ENCODE measurements at regions of chr1 and their contacts with region 1.

Region 1: GRCh38 chr1:248807067-248807737 is 18.5 kb downstream of the SH3BP5L start:
- DNase-seq: no peak
- ATAC-seq: peak; percentile 79
- H3K4me3 ChIP-seq: no peak overlapping the region
- H3K27ac ChIP-seq: no peak overlapping the region
- H3K4me1 ChIP-seq: peaks cover 24% of the 10 kb centered on the region
- H3K27me3 ChIP-seq: no peaks in the 10 kb centered on the region
- CTCF ChIP-seq: peak; percentile 91 to 96 (median 95)
- EP300 ChIP-seq: no peak
- POLR2A ChIP-seq: 0 out of 2 replicates have a peak, but pooled peaks have one; percentile 23
- RAD21 ChIP-seq: peak; percentile 99

Region 2: DNA sequence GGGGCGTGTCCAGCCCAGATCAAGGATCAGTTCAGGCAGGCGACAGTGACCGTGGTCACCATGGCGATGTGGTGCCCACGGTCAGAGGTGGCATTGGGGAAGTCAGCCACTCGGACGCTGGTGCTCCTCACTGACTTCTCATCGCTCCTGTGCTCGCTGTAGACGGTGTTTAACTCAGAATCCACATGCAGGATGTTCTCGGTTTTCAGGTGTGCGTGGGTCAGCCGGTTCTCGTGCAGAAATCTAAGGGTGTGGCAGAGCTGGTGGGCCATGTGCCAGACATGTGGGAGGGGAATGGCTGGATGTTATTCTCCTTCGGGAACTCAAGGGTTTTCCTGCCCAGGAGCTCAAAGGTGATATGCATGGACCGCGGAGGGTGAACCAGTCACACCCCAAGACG is 870.8 kb before region 1 on chr1:
- CTCF ChIA-PET with region 1: interaction called, 13 read pairs
- POLR2A ChIA-PET with region 1: no interaction called
- RAD21 ChIA-PET with region 1: interaction called, 3 read pairs
- SMC1A ChIA-PET with region 1: interaction called, 4 read pairs
- in situ Hi-C with region 1: no loop called
- intact Hi-C with region 1: no loop called
- DNase-seq: no peak
- ATAC-seq: no peak
- H3K4me3 ChIP-seq: no peak overlapping the region
- H3K27ac ChIP-seq: no peak overlapping the region
- H3K4me1 ChIP-seq: no peaks in the 10 kb centered on the region
- H3K27me3 ChIP-seq: no peaks in the 10 kb centered on the region
- CTCF ChIP-seq: no peak
- EP300 ChIP-seq: no peak
- POLR2A ChIP-seq: no peak
- RAD21 ChIP-seq: no peak

Region 3: DNA sequence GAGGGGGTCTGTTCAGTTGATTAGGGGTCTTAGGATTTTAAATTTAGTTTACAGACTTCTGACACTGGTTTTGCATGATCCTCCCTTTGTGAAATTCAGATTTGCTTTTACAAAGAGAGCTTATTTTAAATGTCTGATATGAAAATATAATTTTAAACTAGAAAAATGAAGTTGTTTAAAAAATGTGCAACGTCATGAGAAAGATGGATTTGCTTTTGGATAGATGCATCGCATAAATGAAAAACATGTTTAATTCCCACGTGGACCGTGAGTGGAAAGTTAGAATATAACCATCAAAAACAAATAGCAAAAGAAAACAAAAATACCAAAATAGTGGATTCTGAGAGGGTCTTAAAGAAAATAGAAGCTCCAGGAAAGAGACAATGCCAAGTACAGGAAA is 336.0 kb before region 1 on chr1:
- CTCF ChIA-PET with region 1: interaction called, 3 read pairs
- POLR2A ChIA-PET with region 1: no interaction called
- RAD21 ChIA-PET with region 1: interaction called, 5 read pairs
- SMC1A ChIA-PET with region 1: interaction called, 5 read pairs
- in situ Hi-C with region 1: no loop called
- intact Hi-C with region 1: loop called (anchors 5 kb)
- DNase-seq: no peak
- ATAC-seq: no peak
- H3K4me3 ChIP-seq: no peak overlapping the region
- H3K27ac ChIP-seq: no peak overlapping the region
- H3K4me1 ChIP-seq: 0 out of 2 replicates have a peak, but pooled peaks cover 4% of the 10 kb centered on the region
- H3K27me3 ChIP-seq: no peaks in the 10 kb centered on the region
- CTCF ChIP-seq: no peak
- EP300 ChIP-seq: no peak
- POLR2A ChIP-seq: no peak
- RAD21 ChIP-seq: no peak

Region 4: DNA sequence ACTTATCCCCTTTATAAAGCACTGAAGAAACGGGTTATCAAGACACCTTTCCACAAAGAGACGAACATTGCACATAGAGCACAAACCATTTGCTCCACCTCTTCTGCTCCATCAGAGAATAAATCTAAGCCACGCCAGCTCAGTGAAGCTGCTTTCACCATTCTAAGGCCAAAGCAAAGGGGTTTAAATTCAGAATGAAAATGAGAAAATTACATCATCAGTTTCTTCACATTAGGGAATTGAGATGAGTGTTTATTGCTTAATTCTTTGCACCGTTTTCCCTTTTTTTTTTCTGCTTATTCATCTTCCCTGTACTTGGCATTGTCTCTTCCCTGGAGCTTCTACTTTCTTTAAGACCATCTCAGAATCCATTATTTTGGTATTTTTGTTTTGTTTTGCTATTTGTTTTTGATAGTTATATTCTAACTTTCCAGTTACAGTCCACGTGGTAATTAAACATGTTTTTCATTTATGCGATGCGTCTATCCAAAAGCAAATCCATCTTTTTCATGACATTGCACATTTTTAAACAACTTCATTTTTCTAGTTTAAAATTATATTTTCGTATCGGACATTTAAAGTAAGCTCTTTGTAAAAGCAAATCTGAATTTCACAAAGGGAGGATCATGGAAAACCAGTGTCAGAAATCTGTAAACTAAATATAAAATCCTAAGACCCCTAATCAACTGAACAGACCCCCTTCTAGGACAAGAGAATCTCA is 230.8 kb before region 1 on chr1:
- CTCF ChIA-PET with region 1: no interaction called
- POLR2A ChIA-PET with region 1: no interaction called
- RAD21 ChIA-PET with region 1: no interaction called
- SMC1A ChIA-PET with region 1: no interaction called
- in situ Hi-C with region 1: no loop called
- intact Hi-C with region 1: no loop called
- DNase-seq: no peak
- ATAC-seq: no peak
- H3K4me3 ChIP-seq: no peak overlapping the region
- H3K27ac ChIP-seq: no peak overlapping the region
- H3K4me1 ChIP-seq: no peaks in the 10 kb centered on the region
- H3K27me3 ChIP-seq: no peaks in the 10 kb centered on the region
- CTCF ChIP-seq: no peak
- EP300 ChIP-seq: no peak
- POLR2A ChIP-seq: no peak
- RAD21 ChIP-seq: no peak

Region 5: DNA sequence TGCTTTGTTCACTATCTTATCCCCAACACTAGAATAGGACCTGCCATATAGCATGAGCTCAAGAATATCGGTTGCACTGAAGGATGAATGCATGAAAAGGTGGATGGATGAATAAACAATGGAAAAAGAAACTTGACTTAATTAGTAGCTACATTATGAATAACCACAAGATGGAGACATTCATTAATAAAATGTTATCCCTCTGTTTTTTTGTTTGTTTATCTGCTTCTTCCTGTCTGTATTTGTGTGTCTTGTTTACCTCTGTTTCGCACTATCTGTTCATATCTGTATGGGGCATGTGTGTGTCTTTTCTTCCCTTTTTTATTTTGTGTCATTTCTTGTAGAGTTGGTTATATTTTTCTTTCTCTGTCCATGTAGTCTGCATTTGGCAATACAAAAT is 103.5 kb before region 1 on chr1:
- CTCF ChIA-PET with region 1: interaction called, 50 read pairs
- POLR2A ChIA-PET with region 1: interaction called, 3 read pairs
- RAD21 ChIA-PET with region 1: interaction called, 53 read pairs
- SMC1A ChIA-PET with region 1: interaction called, 61 read pairs
- in situ Hi-C with region 1: loop called (anchors 5 kb)
- intact Hi-C with region 1: no loop called
- DNase-seq: no peak
- ATAC-seq: no peak
- H3K4me3 ChIP-seq: no peak overlapping the region
- H3K27ac ChIP-seq: no peak overlapping the region
- H3K4me1 ChIP-seq: no peaks in the 10 kb centered on the region
- H3K27me3 ChIP-seq: no peaks in the 10 kb centered on the region
- CTCF ChIP-seq: peak in 1 of 3 experiments; percentile 5; a peak in 1 of 6 replicates
- EP300 ChIP-seq: no peak
- POLR2A ChIP-seq: no peak
- RAD21 ChIP-seq: no peak

Region 6: GRCh38 chr1:248757784-248758195 is 49.4 kb before region 1 on chr1:
- CTCF ChIA-PET with region 1: no interaction called
- POLR2A ChIA-PET with region 1: no interaction called
- RAD21 ChIA-PET with region 1: no interaction called
- SMC1A ChIA-PET with region 1: no interaction called
- in situ Hi-C with region 1: no loop called
- intact Hi-C with region 1: no loop called
- DNase-seq: no peak
- ATAC-seq: no peak
- H3K4me3 ChIP-seq: no peak overlapping the region
- H3K27ac ChIP-seq: no peak overlapping the region
- H3K4me1 ChIP-seq: no peaks in the 10 kb centered on the region
- H3K27me3 ChIP-seq: no peaks in the 10 kb centered on the region
- CTCF ChIP-seq: no peak
- EP300 ChIP-seq: no peak
- POLR2A ChIP-seq: no peak
- RAD21 ChIP-seq: no peak

Region 7: GRCh38 chr1:248793592-248793991 is 13.6 kb before region 1 on chr1:
- CTCF ChIA-PET with region 1: interaction called, 20 read pairs
- POLR2A ChIA-PET with region 1: interaction called, 5 read pairs
- RAD21 ChIA-PET with region 1: interaction called, 43 read pairs
- SMC1A ChIA-PET with region 1: interaction called, 89 read pairs
- in situ Hi-C with region 1: no loop called
- intact Hi-C with region 1: loop called (anchors 1 kb)
- DNase-seq: peak; percentile 82
- ATAC-seq: peak; percentile 97
- H3K4me3 ChIP-seq: no peak overlapping the region
- H3K27ac ChIP-seq: no peak overlapping the region
- H3K4me1 ChIP-seq: peaks cover 18% of the 10 kb centered on the region
- H3K27me3 ChIP-seq: no peaks in the 10 kb centered on the region
- CTCF ChIP-seq: no peak
- EP300 ChIP-seq: peak in 1 of 2 experiments; percentile 86; a peak in 2 of 4 replicates
- POLR2A ChIP-seq: no peak
- RAD21 ChIP-seq: 0 out of 2 replicates have a peak, but pooled peaks have one; percentile 9

Region 8: DNA sequence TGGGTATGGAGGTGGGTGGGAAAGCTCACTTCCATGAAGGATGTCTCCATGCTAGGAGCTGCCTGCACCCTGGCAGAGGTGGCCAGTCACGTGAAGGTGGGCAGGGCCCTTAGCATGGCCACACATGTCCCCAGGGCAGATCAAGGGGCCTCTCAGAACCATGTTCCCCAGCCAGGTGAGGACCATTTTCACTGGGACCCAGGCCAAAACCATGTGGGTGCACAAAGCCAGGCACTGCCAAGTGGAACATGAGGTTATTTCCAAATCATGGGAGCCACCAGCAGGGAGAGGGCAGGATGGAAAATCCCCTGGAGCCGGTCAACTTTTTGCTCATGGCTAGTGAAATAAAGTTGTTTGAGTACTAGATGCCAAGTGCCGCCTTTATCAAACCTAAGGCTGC is 42.0 kb after region 1 on chr1:
- CTCF ChIA-PET with region 1: no interaction called
- POLR2A ChIA-PET with region 1: no interaction called
- RAD21 ChIA-PET with region 1: no interaction called
- SMC1A ChIA-PET with region 1: no interaction called
- in situ Hi-C with region 1: no loop called
- intact Hi-C with region 1: no loop called
- DNase-seq: no peak
- ATAC-seq: no peak
- H3K4me3 ChIP-seq: no peak overlapping the region
- H3K27ac ChIP-seq: no peak overlapping the region
- H3K4me1 ChIP-seq: peaks cover 17% of the 10 kb centered on the region
- H3K27me3 ChIP-seq: no peaks in the 10 kb centered on the region
- CTCF ChIP-seq: no peak
- EP300 ChIP-seq: no peak
- POLR2A ChIP-seq: 0 out of 2 replicates have a peak, but pooled peaks have one; percentile 38
- RAD21 ChIP-seq: no peak

Region 9: GRCh38 chr1:248858891-248859889 is 52.0 kb after region 1 on chr1 and contains the start of gene ZNF692:
- CTCF ChIA-PET with region 1: interaction called, 10 read pairs
- POLR2A ChIA-PET with region 1: no interaction called
- RAD21 ChIA-PET with region 1: interaction called, 4 read pairs
- SMC1A ChIA-PET with region 1: no interaction called
- in situ Hi-C with region 1: no loop called
- intact Hi-C with region 1: no loop called
- DNase-seq: peak; percentile 85
- ATAC-seq: peak; percentile 86
- H3K4me3 ChIP-seq: peak within 1 kb of the TSS; percentile 95
- H3K27ac ChIP-seq: peak within 1 kb of the TSS; percentile 82
- H3K4me1 ChIP-seq: peaks cover 11% of the 10 kb centered on the region
- H3K27me3 ChIP-seq: no peaks in the 10 kb centered on the region
- CTCF ChIP-seq: no peak
- EP300 ChIP-seq: no peak
- POLR2A ChIP-seq: peak; percentile 91
- RAD21 ChIP-seq: no peak
- polyA plus RNA-seq, gene ZNF692: 5.3 to 18.5 TPM